Activated T-helper 1 cell treated with anti-CD3 and anti-CD28 coated beads, Interleukin-12 subunit alpha, Interleukin-12 subunit beta, Interleukin-2, Interleukin-4 antibody, amounts not matched to agents 30 ng/mL and 10 ng/mL and 1 ng/mL, durations not matched to agents 14 hours and 24 hours and 36 hours (primary cell): ENCODE measurements at regions of chr3 and their contacts with region 1.

Region 1: DNA sequence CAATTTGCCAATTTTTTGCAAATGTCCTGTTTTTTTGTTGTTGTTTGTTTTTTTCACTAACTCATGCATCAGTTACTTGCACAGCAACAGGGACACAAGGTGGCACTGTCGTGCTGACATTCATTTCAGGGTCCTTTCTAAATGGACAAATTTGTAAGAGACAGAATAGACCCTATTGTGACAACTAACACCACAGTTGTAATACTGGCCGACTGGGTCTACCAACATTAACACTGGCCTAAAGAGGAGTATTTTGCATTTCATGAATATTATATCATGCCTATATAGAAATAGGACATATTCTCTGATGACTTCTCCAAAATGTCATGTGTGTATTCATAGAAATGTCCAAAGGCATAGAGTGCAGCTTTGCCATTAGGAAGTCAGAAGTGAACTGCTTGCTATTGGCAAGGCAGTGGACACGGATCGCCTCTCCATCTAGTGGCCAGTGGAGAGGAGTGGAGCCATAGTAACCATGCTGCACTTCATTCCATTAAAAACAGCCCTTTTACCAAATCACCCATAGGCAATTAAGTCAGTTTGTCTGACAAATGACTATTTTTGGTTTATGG is 54.8 kb downstream of the ZBTB20 start:
- DNase-seq: peak; percentile 12
- H3K4me3 Mint-ChIP-seq: no peak overlapping the region
- H3K27ac Mint-ChIP-seq: no peak overlapping the region
- H3K4me1 Mint-ChIP-seq: no peaks in the 10 kb centered on the region
- H3K27me3 Mint-ChIP-seq: no peaks in the 10 kb centered on the region

Region 2: GRCh38 chr3:115169808-115170207 is 77.5 kb after region 1 on chr3:
- intact Hi-C with region 1: loop called (anchors 1 kb)
- DNase-seq: no peak
- H3K4me3 Mint-ChIP-seq: no peak overlapping the region
- H3K27ac Mint-ChIP-seq: no peak overlapping the region
- H3K4me1 Mint-ChIP-seq: peaks cover 13% of the 10 kb centered on the region
- H3K27me3 Mint-ChIP-seq: peaks cover 10% of the 10 kb centered on the region

Region 3: DNA sequence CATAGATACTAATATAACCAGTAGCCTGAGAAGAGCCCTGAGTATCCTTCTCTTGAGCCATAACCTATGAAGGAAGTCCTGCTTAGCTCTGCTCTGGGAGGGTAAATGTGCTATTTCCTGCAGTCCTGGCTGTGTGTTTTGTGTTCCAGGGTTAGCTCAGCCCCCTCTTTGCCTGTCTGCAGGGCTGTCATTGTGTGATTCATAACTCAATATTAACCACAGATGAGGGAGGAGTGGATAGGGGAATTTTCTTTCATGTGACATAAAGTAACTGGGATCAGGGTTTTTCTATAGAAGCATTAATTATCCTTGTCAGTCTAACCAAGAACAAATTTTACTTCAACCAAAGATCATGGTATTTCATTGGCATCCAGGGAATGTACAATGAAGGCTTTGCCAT is 238.1 kb after region 1 on chr3:
- intact Hi-C with region 1: loop called (anchors 10 kb)
- DNase-seq: no peak
- H3K4me3 Mint-ChIP-seq: no peak overlapping the region
- H3K27ac Mint-ChIP-seq: no peak overlapping the region
- H3K4me1 Mint-ChIP-seq: no peaks in the 10 kb centered on the region
- H3K27me3 Mint-ChIP-seq: peaks cover 2% of the 10 kb centered on the region

Region 4: GRCh38 chr3:115783938-115784738 is 691.8 kb after region 1 on chr3:
- intact Hi-C with region 1: loop called (anchors 1 kb)
- DNase-seq: peak; percentile 76
- H3K4me3 Mint-ChIP-seq: peak overlapping the region; percentile 83
- H3K27ac Mint-ChIP-seq: peak overlapping the region; percentile 95
- H3K4me1 Mint-ChIP-seq: peaks cover 12% of the 10 kb centered on the region
- H3K27me3 Mint-ChIP-seq: peaks cover 8% of the 10 kb centered on the region

Region 5: GRCh38 chr3:115814778-115815380 is 722.6 kb after region 1 on chr3:
- intact Hi-C with region 1: loop called (anchors 1 kb)
- DNase-seq: peak; percentile 33
- H3K4me3 Mint-ChIP-seq: no peak overlapping the region
- H3K27ac Mint-ChIP-seq: no peak overlapping the region
- H3K4me1 Mint-ChIP-seq: peaks cover 4% of the 10 kb centered on the region
- H3K27me3 Mint-ChIP-seq: peaks cover 6% of the 10 kb centered on the region

Region 6: DNA sequence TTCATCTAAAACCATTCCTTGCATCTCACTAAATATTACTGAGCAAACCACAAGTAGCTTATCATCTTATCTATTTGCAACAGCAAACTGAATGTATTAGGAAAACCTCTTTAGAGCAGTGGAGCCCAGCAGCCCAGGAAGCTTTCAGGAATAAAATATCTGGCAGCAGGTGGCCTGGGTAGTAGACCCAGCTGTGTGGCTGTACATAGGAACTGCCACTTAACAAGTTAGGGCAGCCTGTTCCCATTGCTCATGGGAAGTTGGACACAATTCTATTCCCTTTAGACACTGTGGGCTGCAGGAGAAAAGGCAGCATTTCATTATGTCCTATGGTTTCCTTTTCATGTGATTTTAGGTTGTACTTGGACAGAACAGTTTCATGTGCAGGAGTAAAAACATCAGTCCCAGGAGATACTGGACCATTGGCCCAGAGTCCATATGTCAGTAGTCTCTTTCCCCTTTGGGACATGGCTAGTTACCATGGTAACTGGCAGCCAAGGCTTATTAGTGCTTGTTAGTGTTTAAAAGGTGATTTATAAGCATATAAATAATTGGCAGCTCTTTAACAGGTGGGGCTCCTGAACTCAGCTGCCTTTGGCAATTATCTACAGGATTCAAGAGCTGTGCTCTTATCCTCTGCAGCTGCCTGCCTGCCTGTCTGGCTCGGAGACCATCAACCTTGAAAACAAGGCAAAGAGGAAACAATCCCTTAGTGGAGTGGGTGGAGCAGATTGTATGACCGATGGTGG is 1381.9 kb after region 1 on chr3:
- intact Hi-C with region 1: no loop called
- DNase-seq: no peak
- H3K4me3 Mint-ChIP-seq: no peak overlapping the region
- H3K27ac Mint-ChIP-seq: no peak overlapping the region
- H3K4me1 Mint-ChIP-seq: no peaks in the 10 kb centered on the region
- H3K27me3 Mint-ChIP-seq: no peaks in the 10 kb centered on the region